Transverse colon (tissue), 4 donors: ENCODE measurements at regions of chr2 and their contacts with region 1.

Region 1: GRCh38 chr2:127655209-127656073 is 9.5 kb downstream of the GPR17 start:
- DNase-seq: no peak
- H3K4me3 ChIP-seq: no peak overlapping the region
- H3K27ac ChIP-seq: peak overlapping the region; percentile 81 to 91 (median 86)
- H3K4me1 ChIP-seq: peaks cover 30 to 68% (median 46%) of the 10 kb centered on the region in 4 donors
- H3K27me3 ChIP-seq: no peaks in the 10 kb centered on the region
- CTCF ChIP-seq: no peak
- EP300 ChIP-seq: no peak
- POLR2A ChIP-seq: no peak

Region 2: DNA sequence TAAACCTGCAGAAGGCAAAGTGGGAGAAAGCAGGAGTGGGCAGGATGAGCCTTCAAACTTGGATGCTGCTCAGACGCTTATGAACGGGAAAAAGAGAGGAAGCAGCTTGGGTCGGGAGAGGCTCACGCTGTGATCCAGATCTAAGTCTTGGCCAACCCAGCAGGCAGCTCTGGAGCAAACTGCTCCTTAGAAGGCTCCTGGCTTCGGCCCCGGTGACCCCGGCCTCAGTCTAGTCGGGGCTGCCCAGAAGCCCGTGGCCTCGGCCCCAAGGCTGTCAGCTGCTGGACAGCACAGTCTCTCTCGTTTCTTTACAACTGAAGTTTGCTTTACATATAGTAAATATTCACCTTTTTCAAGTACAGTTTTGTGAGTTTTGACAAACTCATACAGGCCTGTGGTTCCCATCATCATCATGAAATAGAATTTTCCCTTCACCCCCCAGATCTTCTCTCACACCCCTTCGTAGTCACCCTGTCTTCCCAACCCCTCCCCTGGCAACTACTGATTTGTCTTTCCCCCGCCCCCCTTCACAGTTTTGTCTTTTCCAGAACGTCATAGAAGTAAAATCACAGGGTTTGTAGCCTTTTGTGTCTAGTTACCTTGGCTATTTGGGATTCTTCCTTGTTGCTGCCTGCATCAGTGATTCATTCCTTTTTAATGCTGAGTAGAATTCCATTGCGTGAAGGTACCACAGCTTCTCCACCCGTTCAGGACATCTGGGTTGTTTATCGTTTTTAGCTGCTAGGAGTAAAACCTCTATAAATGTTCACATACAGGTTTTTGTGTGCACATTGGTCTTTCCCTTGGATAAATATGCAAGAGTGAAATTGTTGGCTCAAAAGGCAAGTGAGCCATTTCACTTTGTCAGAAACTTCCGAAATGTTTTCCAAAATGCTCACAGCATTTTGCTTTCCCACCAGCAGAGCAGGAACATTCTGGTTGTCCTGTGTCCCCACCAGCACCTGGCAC is 84.9 kb before region 1 on chr2:
- in situ Hi-C with region 1: no loop called
- intact Hi-C with region 1: no loop called
- DNase-seq: no peak
- H3K4me3 ChIP-seq: no peak overlapping the region
- H3K27ac ChIP-seq: no peak overlapping the region
- H3K4me1 ChIP-seq: no peaks in the 10 kb centered on the region
- H3K27me3 ChIP-seq: no peaks in the 10 kb centered on the region
- CTCF ChIP-seq: no peak
- EP300 ChIP-seq: no peak
- POLR2A ChIP-seq: no peak

Region 3: GRCh38 chr2:127609031-127609751 is 46.2 kb before region 1 on chr2:
- in situ Hi-C with region 1: no loop called
- intact Hi-C with region 1: no loop called
- DNase-seq: no peak
- H3K4me3 ChIP-seq: no peak overlapping the region
- H3K27ac ChIP-seq: no peak overlapping the region
- H3K4me1 ChIP-seq: no peaks in the 10 kb centered on the region
- H3K27me3 ChIP-seq: no peaks in the 10 kb centered on the region
- CTCF ChIP-seq: no peak
- EP300 ChIP-seq: no peak
- POLR2A ChIP-seq: no peak

Region 4: DNA sequence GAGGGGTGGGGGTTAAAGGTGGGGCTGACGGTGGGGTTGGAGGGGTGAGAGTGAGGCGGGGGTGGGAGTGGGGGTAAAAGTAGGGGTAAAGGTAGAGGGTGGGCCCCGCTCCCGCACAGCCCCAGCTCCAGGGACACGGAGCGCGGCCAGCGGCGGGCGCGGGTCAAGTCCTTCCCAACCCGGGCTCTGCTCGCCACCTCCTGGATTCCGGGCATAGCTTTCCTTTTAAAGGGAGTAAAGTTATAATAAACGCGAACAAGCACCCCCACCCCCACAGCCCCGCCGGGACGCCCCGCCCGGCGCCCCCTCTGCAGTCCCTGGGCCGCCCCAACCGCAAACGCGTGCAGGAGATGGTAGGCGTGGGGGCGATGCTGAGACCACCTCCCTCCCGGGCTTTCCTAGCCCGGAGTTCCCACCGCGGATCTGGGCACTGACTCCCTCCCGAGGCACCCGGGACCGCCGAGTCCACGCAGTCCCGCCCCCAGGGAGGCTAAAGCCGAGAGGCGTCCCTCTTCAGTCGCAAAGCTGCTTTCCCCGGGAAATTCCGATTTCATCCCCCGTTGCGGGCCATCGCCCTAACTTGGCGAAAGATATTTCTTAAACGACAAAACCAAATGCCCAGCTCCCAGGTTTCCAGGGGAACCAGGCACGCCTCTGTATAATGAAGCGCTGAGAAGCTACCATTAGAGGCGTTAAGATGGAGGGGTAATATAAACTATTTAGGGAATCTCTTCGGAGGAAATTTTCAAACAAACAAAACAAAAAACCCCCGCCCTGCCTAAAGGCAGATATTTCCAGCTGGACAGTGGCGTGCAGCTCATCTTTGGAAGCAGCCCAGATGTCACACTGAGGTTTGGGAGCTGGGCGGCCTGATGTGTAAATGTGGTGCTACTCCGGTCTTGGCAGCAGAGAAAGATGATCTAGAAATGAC is 20.2 kb after region 1 on chr2 and contains the start of gene LIMS2:
- in situ Hi-C with region 1: no loop called
- intact Hi-C with region 1: loop called (anchors 2 kb)
- DNase-seq: no peak
- H3K4me3 ChIP-seq: peak within 1 kb of the TSS; percentile 42 to 77 (median 69)
- H3K27ac ChIP-seq: peak within 1 kb of the TSS; percentile 84 to 95 (median 86)
- H3K4me1 ChIP-seq: peaks cover 5 to 25% (median 16%) of the 10 kb centered on the region in 4 donors
- H3K27me3 ChIP-seq: peaks cover 52% of the 10 kb centered on the region
- CTCF ChIP-seq: peak in 1 of 5 experiments; percentile 8
- EP300 ChIP-seq: no peak
- POLR2A ChIP-seq: no peak
- total RNA-seq, gene LIMS2: 34.5 to 198 (median 91.3) TPM